ENCODE measurements at regions of chr2 and their contacts with region 1.

Region 1: DNA sequence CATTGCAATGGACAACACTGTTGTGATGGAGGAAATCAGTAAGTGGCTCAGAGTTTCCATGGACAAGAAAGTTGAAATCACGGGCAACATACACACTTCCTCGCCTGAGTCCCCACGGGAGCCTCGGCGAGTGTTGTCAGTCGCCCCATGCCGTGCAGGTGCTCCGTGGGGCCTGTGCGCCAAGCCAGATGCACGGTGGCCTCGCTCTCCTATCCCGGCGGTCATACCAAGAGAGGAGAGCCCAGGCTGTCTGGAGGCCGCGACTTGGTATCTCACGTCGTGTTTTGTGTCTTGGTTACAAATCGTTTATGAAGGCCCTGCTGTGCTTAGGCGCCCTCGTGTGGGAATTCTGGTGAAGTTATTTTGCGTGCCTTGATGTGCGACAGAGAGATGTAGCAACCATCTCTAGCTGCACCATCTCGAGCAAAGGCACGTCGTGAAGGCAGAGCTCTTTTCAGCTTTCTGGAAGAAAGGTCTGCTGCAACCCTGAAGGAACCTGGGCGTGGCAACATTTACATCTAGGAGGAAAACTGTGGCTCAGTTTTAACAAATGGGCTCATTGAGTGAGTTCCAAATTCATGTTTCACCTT is 21.8 kb downstream of the ATG4B start:
- DNase-seq: peak in 9 of 10 donors; percentile 55 to 88 (median 78)
- H3K4me3 ChIP-seq: no peak overlapping the region
- H3K27ac ChIP-seq: peak overlapping the region in 34 of 59 donors; percentile 1 to 80 (median 38)
- H3K27me3 ChIP-seq: no peaks in the 10 kb centered on the region
- CTCF ChIP-seq: peak in 55 of 56 donors; percentile 27 to 75 (median 61)

Region 2: GRCh38 chr2:240851078-240851991 is 807.9 kb before region 1 on chr2:
- intact Hi-C with region 1: loop called in 1 of 2 experiments (anchors 5 kb)
- DNase-seq: peak; percentile 85 to 95 (median 91)
- H3K4me3 ChIP-seq: no peak overlapping the region
- H3K27ac ChIP-seq: peak overlapping the region in 1 of 59 donors; percentile 66
- H3K27me3 ChIP-seq: no peaks in the 10 kb centered on the region
- CTCF ChIP-seq: peak; percentile 83 to 99 (median 95)

Region 3: DNA sequence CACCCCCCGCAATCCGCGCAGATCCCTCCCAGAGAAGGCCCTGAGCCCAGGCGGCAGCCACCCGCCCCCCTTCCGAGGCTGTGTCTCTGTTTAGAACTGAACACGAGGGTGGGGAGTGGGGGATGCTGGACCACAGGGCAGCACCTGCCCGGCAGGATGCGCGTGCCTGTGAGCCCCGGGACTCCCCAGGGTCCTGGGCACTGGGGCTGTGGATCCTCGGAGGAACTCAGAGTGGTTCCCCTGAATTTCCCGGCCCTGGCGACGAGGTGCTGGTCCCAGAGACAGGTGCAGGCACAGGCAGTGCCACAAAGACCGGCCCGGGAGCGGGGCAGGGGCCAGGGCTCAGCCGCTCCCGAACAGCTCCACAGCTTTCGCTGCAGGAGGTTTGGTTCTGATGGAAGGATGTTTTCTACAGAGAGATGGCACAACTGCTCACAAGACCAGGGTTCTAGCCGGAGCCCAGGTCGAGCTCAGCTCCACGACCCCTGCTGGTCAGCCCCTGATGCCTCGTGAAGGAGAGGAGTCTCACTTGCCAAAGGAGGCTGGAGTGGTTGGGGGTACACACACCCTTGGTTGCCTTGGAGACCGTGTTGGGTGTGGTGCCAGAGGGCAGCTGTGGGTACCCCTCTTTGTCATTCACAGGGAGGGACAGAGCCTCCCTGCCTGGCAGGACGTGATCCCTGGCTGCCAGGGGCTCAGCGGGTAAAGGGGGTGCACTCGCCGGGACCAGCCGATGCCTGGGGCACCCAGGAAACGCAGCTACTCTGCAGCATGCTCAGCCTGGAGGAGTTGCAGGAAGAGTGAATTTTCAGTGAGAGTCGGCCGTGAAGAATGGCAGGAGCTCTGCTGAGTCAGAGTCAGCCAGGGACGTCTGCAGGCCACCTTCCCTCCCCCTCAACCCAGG is 145.3 kb after region 1 on chr2:
- intact Hi-C with region 1: no loop called
- DNase-seq: peak in 5 of 10 donors; percentile 18 to 42 (median 35)
- H3K4me3 ChIP-seq: peak overlapping the region in 58 of 59 donors; percentile 10 to 72 (median 57)
- H3K27ac ChIP-seq: peak overlapping the region in 54 of 59 donors; percentile 8 to 92 (median 80)
- H3K27me3 ChIP-seq: peaks cover 0 to 22% (median 0%) of the 10 kb centered on the region in 45 donors
- CTCF ChIP-seq: peak in 3 of 56 donors; percentile 4 to 15 (median 7)